ENCODE measurements at regions of chr17 and their contacts with region 1.

Region 1: DNA sequence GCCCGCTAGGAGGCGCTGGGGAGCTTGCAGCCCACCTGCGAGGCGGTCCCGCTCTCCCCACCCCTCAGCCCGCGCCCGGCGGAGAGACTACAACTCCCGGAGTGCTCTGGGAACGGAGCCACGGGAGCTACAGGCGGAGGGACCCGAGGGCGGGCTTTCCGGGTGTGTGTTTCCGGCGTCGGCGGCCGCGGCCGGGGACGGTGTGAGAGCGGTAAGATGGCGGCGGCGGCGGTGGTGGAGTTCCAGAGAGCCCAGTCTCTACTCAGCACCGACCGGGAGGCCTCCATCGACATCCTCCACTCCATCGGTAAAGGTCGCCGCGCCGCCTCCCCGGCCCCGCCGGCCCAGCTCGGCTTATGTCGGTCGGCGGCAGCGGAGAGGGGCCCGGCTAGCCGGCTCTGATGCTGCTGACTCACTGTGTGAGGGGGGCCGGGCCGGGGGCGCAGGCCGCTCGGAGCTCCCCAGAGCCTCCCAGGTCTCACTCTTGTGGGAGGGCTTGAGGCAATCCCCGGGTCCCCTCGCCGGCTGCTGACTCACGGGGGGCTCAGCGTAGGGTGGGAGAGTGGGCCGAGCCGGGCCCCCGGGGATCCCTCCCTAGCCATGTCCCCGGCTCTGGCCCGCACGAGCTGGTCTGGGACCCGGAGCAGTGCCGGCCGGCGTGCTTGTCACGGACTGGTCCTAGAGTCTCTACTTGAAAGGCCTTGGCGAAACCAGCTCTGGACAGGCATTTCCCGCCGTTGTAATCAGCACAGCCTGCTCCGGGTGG is at the start of gene PSMD11:
- DNase-seq: peak; percentile 99
- H3K4me3 ChIP-seq: peak within 1 kb of the TSS; percentile 93 to 100 (median 99)
- H3K27ac ChIP-seq: peak within 1 kb of the TSS; percentile 84 to 92 (median 86)
- H3K4me1 ChIP-seq: peaks cover 0 to 31% (median 25%) of the 10 kb centered on the region in 4 donors
- H3K27me3 ChIP-seq: no peaks in the 10 kb centered on the region
- CTCF ChIP-seq: peak; percentile 66 to 88 (median 79)
- EP300 ChIP-seq: no peak
- POLR2A ChIP-seq: peak; percentile 39
- total RNA-seq, gene PSMD11: 42.4 to 59.8 (median 43.2) TPM

Region 2: GRCh38 chr17:32370426-32370825 is 74.1 kb before region 1 on chr17:
- intact Hi-C with region 1: loop called (anchors 10 kb)
- DNase-seq: no peak
- H3K4me3 ChIP-seq: no peak overlapping the region
- H3K27ac ChIP-seq: no peak overlapping the region
- H3K4me1 ChIP-seq: no peaks in the 10 kb centered on the region
- H3K27me3 ChIP-seq: no peaks in the 10 kb centered on the region
- CTCF ChIP-seq: no peak
- EP300 ChIP-seq: no peak
- POLR2A ChIP-seq: no peak

Region 3: GRCh38 chr17:32486111-32486700 is 41.7 kb after region 1 on chr17:
- intact Hi-C with region 1: loop called (anchors 2 kb)
- DNase-seq: peak; percentile 79
- H3K4me3 ChIP-seq: peak overlapping the region; percentile 17 to 67 (median 57)
- H3K27ac ChIP-seq: peak overlapping the region; percentile 67 to 79 (median 78)
- H3K4me1 ChIP-seq: peaks cover 0 to 28% (median 25%) of the 10 kb centered on the region in 4 donors
- H3K27me3 ChIP-seq: no peaks in the 10 kb centered on the region
- CTCF ChIP-seq: no peak
- EP300 ChIP-seq: no peak
- POLR2A ChIP-seq: no peak

Region 4: DNA sequence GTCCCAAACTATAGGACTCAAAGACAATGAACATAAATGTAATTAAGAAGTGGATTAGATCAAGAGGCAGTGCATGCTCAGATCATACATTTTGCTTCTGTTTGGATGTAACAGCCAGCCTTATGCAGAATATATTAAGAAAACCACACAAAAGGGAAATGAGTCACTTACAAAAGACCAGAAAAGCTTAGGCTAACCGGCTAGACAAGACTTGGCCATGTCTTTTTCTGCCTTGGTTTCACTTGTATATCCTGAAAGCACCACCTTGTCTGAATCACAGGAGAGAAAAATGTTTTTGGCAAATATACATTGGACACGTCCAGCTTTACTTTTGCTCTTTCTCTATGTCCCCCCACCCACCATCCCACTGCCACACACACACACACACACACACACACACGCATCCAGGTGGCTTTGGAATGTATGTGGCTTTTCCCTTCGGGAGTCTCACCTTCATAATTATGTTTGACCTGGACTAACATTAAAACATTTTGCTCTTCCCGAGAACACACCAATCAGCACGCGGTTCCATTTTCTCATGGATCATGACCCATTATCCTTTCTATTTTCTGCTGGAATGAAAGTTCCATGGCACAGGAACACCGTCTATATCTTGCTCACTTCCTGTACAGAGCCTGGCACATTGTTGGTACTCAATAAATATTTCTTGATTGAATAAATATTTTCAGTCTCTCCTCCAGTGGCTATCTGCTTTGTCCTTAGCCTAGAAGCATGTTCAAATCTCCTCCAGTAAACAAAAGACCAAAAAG is 106.9 kb after region 1 on chr17:
- intact Hi-C with region 1: no loop called
- DNase-seq: no peak
- H3K4me3 ChIP-seq: no peak overlapping the region
- H3K27ac ChIP-seq: no peak overlapping the region
- H3K4me1 ChIP-seq: no peaks in the 10 kb centered on the region
- H3K27me3 ChIP-seq: no peaks in the 10 kb centered on the region
- CTCF ChIP-seq: no peak
- EP300 ChIP-seq: no peak
- POLR2A ChIP-seq: no peak